GM12878 (cell line): ENCODE measurements at regions of chr22 and their contacts with region 1.

Region 1: DNA sequence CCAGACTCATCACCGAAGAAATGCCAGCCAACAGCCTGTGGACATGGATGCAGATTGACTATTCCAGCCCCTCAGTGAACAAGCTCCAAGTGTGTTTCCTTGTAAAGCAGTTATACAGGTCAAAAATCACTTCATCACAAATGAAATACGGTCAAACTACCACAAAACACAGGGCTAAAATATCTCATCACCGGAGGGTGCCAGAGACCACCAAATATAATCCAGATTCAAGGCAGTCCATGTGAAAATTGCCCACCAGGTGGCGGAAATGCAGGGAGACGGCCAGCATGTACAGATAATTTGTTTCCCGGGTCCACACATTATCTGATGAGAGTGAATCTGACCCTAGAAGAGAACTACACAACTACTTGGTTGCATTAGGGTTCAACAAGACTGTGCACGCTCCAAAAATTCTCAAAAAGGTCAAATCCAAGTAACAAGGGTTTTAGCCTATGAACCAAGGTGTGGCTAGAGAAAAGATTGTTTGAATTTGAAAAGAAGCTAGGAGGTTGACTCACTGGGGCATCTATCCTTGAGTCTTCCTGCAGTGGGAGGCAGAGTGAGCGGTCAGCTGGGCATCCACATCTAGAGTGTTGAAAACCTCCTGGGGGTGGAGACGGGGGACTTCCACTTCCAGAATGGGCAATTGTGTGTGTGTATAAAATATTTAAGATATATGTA is 71.7 kb downstream of the IGLL5 start:
- DNase-seq: peak; percentile 56
- ATAC-seq: peak; percentile 66
- H3K4me3 ChIP-seq: no peak overlapping the region
- H3K27ac ChIP-seq: no peak overlapping the region
- H3K4me1 ChIP-seq: peaks cover 11% of the 10 kb centered on the region
- H3K27me3 ChIP-seq: no peaks in the 10 kb centered on the region
- CTCF ChIP-seq: peak; percentile 81 to 100 (median 95); a peak in 5 of 6 replicates
- EP300 ChIP-seq: no peak
- POLR2A ChIP-seq: no peak
- RAD21 ChIP-seq: peak; percentile 100

Region 2: GRCh38 chr22:22043296-22044078 is 915.8 kb before region 1 on chr22:
- CTCF ChIA-PET with region 1: interaction called, 16 read pairs
- POLR2A ChIA-PET with region 1: no interaction called
- RAD21 ChIA-PET with region 1: interaction called, 24 read pairs
- SMC1A ChIA-PET with region 1: interaction called, 14 read pairs
- in situ Hi-C with region 1: no loop called
- intact Hi-C with region 1: no loop called
- DNase-seq: no peak
- ATAC-seq: peak; percentile 85
- H3K4me3 ChIP-seq: peak overlapping the region; percentile 44; the same call in 1 of the 2 replicates
- H3K27ac ChIP-seq: peak overlapping the region; percentile 58
- H3K4me1 ChIP-seq: peaks cover 15% of the 10 kb centered on the region
- H3K27me3 ChIP-seq: no peaks in the 10 kb centered on the region
- CTCF ChIP-seq: peak in 2 of 3 experiments; percentile 2 to 20; a peak in 1 of 6 replicates
- EP300 ChIP-seq: no peak
- POLR2A ChIP-seq: peak; percentile 56
- RAD21 ChIP-seq: no peak

Region 3: DNA sequence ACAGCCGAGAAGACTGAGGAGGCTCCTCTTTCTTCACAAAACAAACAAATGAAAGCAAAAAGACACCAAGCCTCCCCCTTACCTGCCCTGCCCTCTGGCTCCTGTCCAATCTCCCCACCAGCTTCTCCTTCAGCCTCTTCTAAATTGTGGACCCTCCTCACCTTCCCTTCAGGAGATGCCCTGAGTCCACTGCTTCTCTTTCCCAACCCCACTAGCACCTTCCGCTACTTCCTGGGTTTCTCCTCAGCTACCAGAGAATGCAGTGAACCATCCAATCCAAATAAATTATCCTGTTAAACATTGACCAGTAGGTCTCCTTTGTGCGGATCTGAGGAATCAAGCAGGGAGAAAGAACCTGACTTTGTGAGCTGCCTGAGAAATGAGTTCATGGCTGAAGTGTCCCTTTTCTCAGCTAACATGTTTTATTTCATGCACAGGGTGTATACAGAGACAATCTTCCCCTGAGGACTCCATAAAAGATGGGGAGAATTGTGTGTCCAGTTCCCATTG is 777.9 kb before region 1 on chr22:
- CTCF ChIA-PET with region 1: interaction called, 9 read pairs
- POLR2A ChIA-PET with region 1: no interaction called
- RAD21 ChIA-PET with region 1: interaction called, 7 read pairs
- SMC1A ChIA-PET with region 1: interaction called, 12 read pairs
- in situ Hi-C with region 1: no loop called
- intact Hi-C with region 1: no loop called
- DNase-seq: no peak
- ATAC-seq: no peak
- H3K4me3 ChIP-seq: no peak overlapping the region
- H3K27ac ChIP-seq: no peak overlapping the region
- H3K4me1 ChIP-seq: peaks cover 3% of the 10 kb centered on the region; the same call in 1 of the 2 replicates
- H3K27me3 ChIP-seq: no peaks in the 10 kb centered on the region
- CTCF ChIP-seq: no peak
- EP300 ChIP-seq: no peak
- POLR2A ChIP-seq: no peak
- RAD21 ChIP-seq: no peak

Region 4: GRCh38 chr22:22838148-22838786 is 121.0 kb before region 1 on chr22:
- CTCF ChIA-PET with region 1: interaction called, 15 read pairs
- POLR2A ChIA-PET with region 1: no interaction called
- RAD21 ChIA-PET with region 1: no interaction called
- SMC1A ChIA-PET with region 1: interaction called, 12 read pairs
- in situ Hi-C with region 1: no loop called
- intact Hi-C with region 1: no loop called
- DNase-seq: no peak
- ATAC-seq: no peak
- H3K4me3 ChIP-seq: no peak overlapping the region
- H3K27ac ChIP-seq: no peak overlapping the region
- H3K4me1 ChIP-seq: no peaks in the 10 kb centered on the region; the same call in 1 of the 2 replicates
- H3K27me3 ChIP-seq: no peaks in the 10 kb centered on the region
- CTCF ChIP-seq: no peak
- EP300 ChIP-seq: no peak
- POLR2A ChIP-seq: no peak
- RAD21 ChIP-seq: no peak

Region 5: GRCh38 chr22:22981670-22982571 is 22.6 kb after region 1 on chr22:
- CTCF ChIA-PET with region 1: interaction called, 78 read pairs
- POLR2A ChIA-PET with region 1: no interaction called
- RAD21 ChIA-PET with region 1: interaction called, 4 read pairs
- SMC1A ChIA-PET with region 1: interaction called, 34 read pairs
- in situ Hi-C with region 1: no loop called
- intact Hi-C with region 1: no loop called
- DNase-seq: no peak
- ATAC-seq: peak; percentile 39
- H3K4me3 ChIP-seq: no peak overlapping the region
- H3K27ac ChIP-seq: no peak overlapping the region
- H3K4me1 ChIP-seq: no peaks in the 10 kb centered on the region
- H3K27me3 ChIP-seq: no peaks in the 10 kb centered on the region; a peak in 1 of 4 replicates
- CTCF ChIP-seq: no peak
- EP300 ChIP-seq: no peak
- POLR2A ChIP-seq: no peak
- RAD21 ChIP-seq: no peak

Region 6: DNA sequence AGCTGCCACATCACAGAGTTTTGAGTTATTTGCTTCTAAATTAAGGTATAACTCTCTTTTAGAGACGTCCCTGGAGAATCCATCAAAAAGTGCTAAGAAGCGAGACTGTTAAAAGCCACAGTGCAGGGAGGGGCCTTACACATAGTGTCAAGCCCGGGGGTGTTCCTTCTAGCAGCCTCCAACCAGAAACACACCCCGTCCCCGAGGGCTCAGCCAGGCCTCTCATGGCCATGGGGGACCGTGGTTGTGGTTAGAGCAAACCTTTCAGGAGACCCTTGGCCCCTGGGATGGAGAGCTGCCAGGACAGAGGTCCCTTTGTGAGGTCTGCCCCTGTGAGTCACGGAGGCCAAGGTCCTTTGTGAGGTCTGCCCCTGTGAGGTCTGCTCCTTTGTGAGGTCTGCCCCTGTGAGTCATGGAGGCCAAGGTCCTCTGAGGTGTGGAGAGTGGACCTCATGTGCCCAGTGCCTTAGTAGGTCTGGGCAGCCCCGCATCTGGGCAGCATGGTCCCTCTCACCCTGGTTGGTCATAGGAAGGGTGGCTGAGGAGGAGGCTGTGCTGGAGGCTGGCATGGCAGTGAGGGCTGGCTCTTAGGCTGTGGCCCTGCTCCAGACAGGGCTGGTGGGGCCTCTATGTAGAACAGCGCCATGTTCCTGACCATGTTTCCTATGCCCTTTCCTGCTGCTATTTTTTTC is 116.4 kb after region 1 on chr22:
- CTCF ChIA-PET with region 1: interaction called, 17 read pairs
- POLR2A ChIA-PET with region 1: interaction called, 5 read pairs
- RAD21 ChIA-PET with region 1: interaction called, 18 read pairs
- SMC1A ChIA-PET with region 1: interaction called, 20 read pairs
- in situ Hi-C with region 1: no loop called
- intact Hi-C with region 1: no loop called
- DNase-seq: no peak
- ATAC-seq: peak; percentile 22
- H3K4me3 ChIP-seq: no peak overlapping the region
- H3K27ac ChIP-seq: no peak overlapping the region
- H3K4me1 ChIP-seq: no peaks in the 10 kb centered on the region
- H3K27me3 ChIP-seq: peaks cover 0 to 6% of the 10 kb centered on the region in 2 experiments; a peak in 2 of 4 replicates
- CTCF ChIP-seq: no peak
- EP300 ChIP-seq: no peak
- POLR2A ChIP-seq: no peak
- RAD21 ChIP-seq: no peak

Region 7: DNA sequence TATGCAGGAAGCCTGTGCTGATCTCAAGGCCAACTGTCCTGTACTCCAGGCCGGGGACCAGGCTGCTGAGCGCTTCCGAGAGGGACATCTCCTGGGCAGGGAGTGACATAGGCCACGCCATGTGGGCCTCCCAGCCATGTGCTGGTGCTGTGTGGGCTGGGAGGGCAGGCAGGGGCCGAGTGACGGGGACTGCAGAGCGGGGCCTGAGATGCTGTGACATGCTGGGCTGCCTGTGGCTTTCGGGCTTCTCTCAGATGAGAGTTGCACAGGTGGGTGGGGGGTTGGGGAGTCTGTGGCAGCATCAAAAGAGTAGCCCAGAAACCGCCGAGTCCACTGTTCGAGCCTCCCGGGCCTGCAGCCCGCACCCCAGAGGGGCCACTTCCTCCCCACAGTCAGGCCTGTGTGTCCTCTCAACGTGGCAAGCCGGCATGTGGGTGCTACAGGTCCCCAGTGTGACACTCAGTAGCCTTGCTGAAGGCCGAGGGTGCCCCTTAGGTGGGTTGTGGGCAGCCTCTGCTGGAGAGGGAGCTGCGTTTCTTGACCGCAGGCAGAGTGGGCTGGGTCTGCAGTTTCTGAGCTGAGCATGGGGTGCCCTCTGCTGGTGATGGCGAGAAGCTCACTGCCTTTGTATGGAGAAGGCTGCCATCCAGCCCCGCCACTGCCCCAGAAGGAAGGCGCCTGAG is 322.3 kb after region 1 on chr22:
- CTCF ChIA-PET with region 1: interaction called, 58 read pairs
- POLR2A ChIA-PET with region 1: no interaction called
- RAD21 ChIA-PET with region 1: interaction called, 39 read pairs
- SMC1A ChIA-PET with region 1: interaction called, 26 read pairs
- in situ Hi-C with region 1: no loop called
- intact Hi-C with region 1: loop called (anchors 1 kb)
- DNase-seq: peak; percentile 25
- ATAC-seq: peak; percentile 94
- H3K4me3 ChIP-seq: no peak overlapping the region
- H3K27ac ChIP-seq: 0 out of 2 replicates have a peak overlapping the region, but pooled peaks have one; percentile 13
- H3K4me1 ChIP-seq: peaks cover 11% of the 10 kb centered on the region
- H3K27me3 ChIP-seq: no peaks in the 10 kb centered on the region
- CTCF ChIP-seq: peak; percentile 93 to 96 (median 94); a peak in 5 of 6 replicates
- EP300 ChIP-seq: no peak
- POLR2A ChIP-seq: no peak
- RAD21 ChIP-seq: peak; percentile 91